ENCODE measurements at regions of chr10 and their contacts with region 1.

Region 1: GRCh38 chr10:95907456-95908253 is at the start of gene CC2D2B:
- DNase-seq: peak; percentile 26 to 91
- H3K4me3 ChIP-seq: peak within 1 kb of the TSS; percentile 73 to 80
- H3K27ac ChIP-seq: peak within 1 kb of the TSS; percentile 82 to 83
- H3K4me1 ChIP-seq: peaks cover 0 to 4% of the 10 kb centered on the region in 2 donors
- H3K27me3 ChIP-seq: no peaks in the 10 kb centered on the region
- CTCF ChIP-seq: peak in 2 of 3 experiments; percentile 11 to 23
- total RNA-seq, gene CC2D2B: 3.9 TPM

Region 2: GRCh38 chr10:95880704-95881103 is 27.0 kb before region 1 on chr10:
- intact Hi-C with region 1: loop called (anchors 2 kb)
- DNase-seq: no peak
- H3K4me3 ChIP-seq: no peak overlapping the region
- H3K27ac ChIP-seq: peak overlapping the region; percentile 70 to 86
- H3K4me1 ChIP-seq: peaks cover 7 to 31% of the 10 kb centered on the region in 2 donors
- H3K27me3 ChIP-seq: no peaks in the 10 kb centered on the region
- CTCF ChIP-seq: no peak

Region 3: DNA sequence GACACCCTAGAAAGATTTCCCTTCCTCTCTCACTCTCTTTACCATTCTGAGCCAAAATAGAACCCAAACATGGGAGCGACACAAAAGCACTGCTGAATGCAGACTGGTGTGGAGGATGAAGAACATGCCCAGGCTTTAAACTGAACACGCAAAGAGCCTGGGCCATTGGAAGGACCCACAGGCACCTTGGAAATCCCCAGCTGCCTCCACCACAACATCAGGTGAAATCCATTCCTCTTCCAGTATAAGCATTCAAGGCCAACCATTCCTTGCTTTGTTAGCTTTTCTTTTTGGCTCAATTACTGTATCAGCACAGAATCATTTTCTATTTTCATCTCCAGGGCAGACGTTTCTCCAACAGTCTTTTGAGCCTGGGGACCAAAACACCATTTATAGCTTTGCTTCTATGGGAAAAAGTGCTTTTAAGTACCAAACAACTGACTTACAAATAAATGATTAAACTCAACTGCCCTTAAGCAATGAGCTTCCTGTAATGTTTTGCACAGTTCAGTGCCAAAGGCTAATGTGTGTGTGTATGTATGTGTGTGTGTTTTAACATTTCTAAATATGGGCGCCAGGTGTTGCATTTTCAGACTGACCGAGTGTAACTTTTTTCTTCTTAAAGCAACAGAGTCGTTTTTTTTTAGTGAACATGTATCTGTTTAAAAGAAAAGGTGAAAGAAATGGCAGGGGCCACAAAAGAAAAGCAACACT is 379.9 kb after region 1 on chr10:
- intact Hi-C with region 1: loop called (anchors 10 kb)
- DNase-seq: no peak
- H3K4me3 ChIP-seq: peak overlapping the region in 1 of 2 donors; percentile 32
- H3K27ac ChIP-seq: peak overlapping the region; percentile 74 to 81
- H3K4me1 ChIP-seq: peaks cover 4 to 10% of the 10 kb centered on the region in 2 donors
- H3K27me3 ChIP-seq: no peaks in the 10 kb centered on the region
- CTCF ChIP-seq: no peak